ENCODE measurements at regions of chr1 and their contacts with region 1.

Region 1: DNA sequence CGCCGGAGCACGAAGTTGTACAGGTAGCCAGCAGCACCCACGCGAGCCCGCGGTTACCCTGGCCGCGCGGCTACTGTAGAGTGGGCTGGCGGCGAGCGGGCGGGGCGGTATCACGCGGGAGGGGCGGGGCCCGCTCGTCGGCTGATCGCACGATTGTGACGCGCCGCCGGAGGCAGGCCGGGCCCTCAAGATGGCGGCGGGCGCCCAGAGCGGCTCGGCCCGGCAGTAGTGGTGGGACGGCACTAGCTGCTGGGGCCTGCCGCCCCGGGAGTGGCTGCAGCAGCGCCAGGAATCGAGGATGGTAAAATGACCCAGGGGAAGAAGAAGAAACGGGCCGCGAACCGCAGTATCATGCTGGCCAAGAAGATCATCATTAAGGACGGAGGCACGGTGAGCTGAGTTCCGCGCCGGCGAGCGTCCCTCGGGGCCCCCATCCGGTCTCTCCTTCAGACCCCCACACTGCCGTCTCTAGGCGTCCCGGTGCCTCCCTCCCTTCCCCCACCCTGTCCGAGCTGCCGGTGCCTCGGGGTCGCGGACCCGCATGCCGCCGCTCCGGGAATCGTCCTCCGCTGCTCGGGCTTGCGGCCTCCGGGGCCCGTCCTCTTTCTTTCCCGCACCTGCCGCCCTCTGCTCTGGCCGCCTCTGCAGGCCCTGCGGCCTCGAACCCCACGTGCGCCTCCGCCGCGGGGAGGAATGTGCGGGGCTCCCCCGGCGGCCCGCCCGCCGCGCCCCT is 68.3 kb downstream of the SLC35A3 start:
- DNase-seq: peak; percentile 90
- H3K4me3 ChIP-seq: peak overlapping the region; percentile 78
- H3K27ac ChIP-seq: peak overlapping the region; percentile 84
- H3K4me1 ChIP-seq: peaks cover 50% of the 10 kb centered on the region
- CTCF ChIP-seq: no peak

Region 2: GRCh38 chr1:99808391-99809115 is 229.5 kb before region 1 on chr1:
- CTCF ChIA-PET with region 1: no interaction called
- POLR2A ChIA-PET with region 1: no interaction called
- intact Hi-C with region 1: loop called (anchors 1 kb)
- DNase-seq: peak; percentile 84
- H3K4me3 ChIP-seq: no peak overlapping the region
- H3K27ac ChIP-seq: no peak overlapping the region
- H3K4me1 ChIP-seq: peaks cover 5% of the 10 kb centered on the region
- CTCF ChIP-seq: peak; percentile 87

Region 3: DNA sequence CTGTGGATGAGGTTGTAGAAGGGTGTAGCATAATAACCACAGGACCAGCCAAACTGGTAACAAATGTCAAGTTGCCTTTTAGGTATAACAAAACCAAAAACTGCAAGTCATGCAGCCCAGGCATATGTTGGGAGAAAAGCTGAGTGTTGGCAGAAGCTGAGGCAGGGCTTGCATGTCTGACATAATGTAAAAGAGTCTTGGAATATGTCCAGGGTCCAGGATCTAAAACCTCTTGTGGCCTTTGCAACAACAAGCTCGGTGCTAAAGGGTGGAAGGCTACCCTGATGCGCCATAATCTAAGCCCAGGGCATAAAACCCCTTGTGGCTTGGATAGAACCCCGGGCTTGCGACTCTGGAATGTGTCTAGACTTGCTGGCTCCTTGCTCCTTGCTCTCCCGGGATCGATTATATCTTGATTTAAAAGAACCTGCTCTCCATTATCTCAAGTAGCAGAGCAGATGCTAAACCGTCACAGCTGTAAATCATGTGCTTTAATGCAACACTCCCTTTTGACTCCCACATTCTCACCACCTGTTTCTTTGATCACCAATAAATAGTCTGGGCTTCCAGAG is 94.8 kb before region 1 on chr1:
- CTCF ChIA-PET with region 1: no interaction called
- POLR2A ChIA-PET with region 1: no interaction called
- intact Hi-C with region 1: no loop called
- DNase-seq: no peak
- H3K4me3 ChIP-seq: no peak overlapping the region
- H3K27ac ChIP-seq: no peak overlapping the region
- H3K4me1 ChIP-seq: no peaks in the 10 kb centered on the region
- CTCF ChIP-seq: no peak

Region 4: GRCh38 chr1:99969729-99970621 is 68.1 kb before region 1 on chr1 and contains the start of gene SLC35A3:
- CTCF ChIA-PET with region 1: interaction called, 3 read pairs
- POLR2A ChIA-PET with region 1: interaction called, 6 read pairs
- intact Hi-C with region 1: loop called (anchors 2 kb)
- DNase-seq: peak; percentile 92
- H3K4me3 ChIP-seq: peak within 1 kb of the TSS; percentile 91
- H3K27ac ChIP-seq: peak within 1 kb of the TSS; percentile 74
- H3K4me1 ChIP-seq: peaks cover 19% of the 10 kb centered on the region
- CTCF ChIP-seq: no peak
- total RNA-seq, gene SLC35A3: 15.9 and 26.8 TPM in 2 replicates

Region 5: DNA sequence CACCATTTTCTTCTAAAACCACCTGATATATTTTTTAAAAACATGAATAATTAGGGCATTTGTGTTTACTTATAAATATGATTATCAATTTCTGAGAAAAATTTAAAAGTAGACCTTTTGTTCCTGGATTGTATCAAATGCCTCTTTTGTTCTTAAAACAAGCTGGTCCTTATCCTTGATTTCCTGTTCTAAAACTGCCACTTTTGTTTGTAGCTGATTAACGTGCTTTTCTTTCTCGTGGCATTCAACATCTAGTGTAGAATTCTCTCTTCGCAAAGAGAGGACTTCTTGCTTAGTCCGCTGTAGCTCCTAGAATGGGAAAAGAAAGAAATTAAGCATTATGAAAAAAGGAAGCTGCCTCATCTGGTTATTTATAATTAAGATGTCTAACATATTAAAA is 69.6 kb after region 1 on chr1:
- CTCF ChIA-PET with region 1: no interaction called
- POLR2A ChIA-PET with region 1: no interaction called
- intact Hi-C with region 1: no loop called
- DNase-seq: no peak
- H3K4me3 ChIP-seq: no peak overlapping the region
- H3K27ac ChIP-seq: no peak overlapping the region
- H3K4me1 ChIP-seq: peaks cover 7% of the 10 kb centered on the region
- CTCF ChIP-seq: no peak

Region 6: GRCh38 chr1:100132566-100133477 is 94.7 kb after region 1 on chr1 and contains the starts of genes SASS6 and TRMT13:
- CTCF ChIA-PET with region 1: no interaction called
- POLR2A ChIA-PET with region 1: interaction called, 6 read pairs
- intact Hi-C with region 1: loop called (anchors 1 kb)
- DNase-seq: peak; percentile 97
- H3K4me3 ChIP-seq: peak within 1 kb of the TSS; percentile 96
- H3K27ac ChIP-seq: peak within 1 kb of the TSS; percentile 74
- H3K4me1 ChIP-seq: peaks cover 30% of the 10 kb centered on the region
- CTCF ChIP-seq: no peak
- total RNA-seq, gene SASS6: 12.1 and 12.6 TPM in 2 replicates
- total RNA-seq, gene TRMT13: 14.5 and 24.2 TPM in 2 replicates

Region 7: DNA sequence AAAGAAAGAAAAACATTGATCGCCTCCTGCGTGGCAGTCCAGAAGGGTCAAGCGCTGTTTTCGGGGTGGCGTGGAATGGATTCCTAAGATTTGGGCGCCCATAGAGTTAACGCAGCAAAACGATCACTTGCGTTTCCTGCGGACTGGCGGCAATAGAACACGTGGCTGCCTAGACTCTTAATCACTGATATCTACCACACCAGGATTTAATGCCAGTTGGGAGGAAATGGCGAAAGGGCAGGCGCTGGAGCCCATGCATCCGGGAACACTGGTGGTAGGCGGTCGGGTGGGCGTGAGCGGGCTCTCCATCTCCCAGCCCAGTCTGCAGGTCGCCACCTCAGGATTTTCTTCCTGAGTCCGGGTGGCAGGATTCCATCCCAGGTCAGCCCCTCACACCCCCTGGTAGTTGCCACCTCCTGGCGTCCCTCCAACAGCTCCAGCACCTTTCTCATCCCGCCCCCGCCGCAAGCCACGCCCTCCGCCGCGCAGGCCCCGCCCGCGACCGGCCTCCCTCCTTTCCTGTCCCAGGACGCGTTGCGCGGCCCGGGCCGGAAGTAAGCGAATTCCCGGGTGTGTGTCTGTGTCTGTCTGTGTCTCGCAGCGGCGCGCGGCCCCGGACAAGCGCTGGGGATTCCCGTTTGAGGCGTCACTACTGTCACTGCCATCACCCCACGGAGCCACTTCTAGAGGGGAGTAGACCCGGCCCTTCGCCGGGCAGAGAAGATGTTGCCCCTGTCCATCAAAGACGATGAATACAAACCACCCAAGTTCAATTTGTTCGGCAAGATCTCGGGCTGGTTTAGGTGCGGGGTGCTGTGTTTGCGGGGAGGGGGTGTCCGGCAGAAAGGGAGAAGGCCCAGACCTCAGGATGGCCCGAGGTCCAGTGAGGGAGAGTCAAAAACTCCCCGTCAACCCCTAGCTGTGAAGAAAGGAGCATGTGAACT is 857.7 kb after region 1 on chr1 and contains the start of gene SLC30A7:
- CTCF ChIA-PET with region 1: no interaction called
- POLR2A ChIA-PET with region 1: no interaction called
- intact Hi-C with region 1: loop called (anchors 10 kb)
- DNase-seq: peak; percentile 88
- H3K4me3 ChIP-seq: peak within 1 kb of the TSS; percentile 99
- H3K27ac ChIP-seq: peak within 1 kb of the TSS; percentile 77
- H3K4me1 ChIP-seq: peaks cover 30% of the 10 kb centered on the region
- CTCF ChIP-seq: no peak
- total RNA-seq, gene SLC30A7: 5.5 and 8.6 TPM in 2 replicates